GM12878 (cell line): ENCODE measurements at regions of chr19 and their contacts with region 1.

Region 1: GRCh38 chr19:7705387-7706187 is 3.7 kb upstream of the FCER2 start:
- DNase-seq: peak; percentile 91
- ATAC-seq: peak; percentile 66
- H3K4me3 ChIP-seq: peak overlapping the region; percentile 53; the same call in 1 of the 2 replicates
- H3K27ac ChIP-seq: peak overlapping the region; percentile 99
- H3K4me1 ChIP-seq: peaks cover 83% of the 10 kb centered on the region
- H3K27me3 ChIP-seq: no peaks in the 10 kb centered on the region
- CTCF ChIP-seq: no peak
- EP300 ChIP-seq: peak; percentile 88 to 92
- POLR2A ChIP-seq: peak; percentile 63; the same call in 1 of the 2 replicates
- RAD21 ChIP-seq: peak; percentile 52

Region 2: GRCh38 chr19:6521718-6522646 is 1183.6 kb before region 1 on chr19:
- CTCF ChIA-PET with region 1: no interaction called
- POLR2A ChIA-PET with region 1: no interaction called
- RAD21 ChIA-PET with region 1: no interaction called
- SMC1A ChIA-PET with region 1: no interaction called
- in situ Hi-C with region 1: loop called (anchors 10 kb)
- intact Hi-C with region 1: no loop called
- DNase-seq: peak; percentile 95
- ATAC-seq: peak; percentile 70
- H3K4me3 ChIP-seq: peak overlapping the region; percentile 60
- H3K27ac ChIP-seq: peak overlapping the region; percentile 99
- H3K4me1 ChIP-seq: peaks cover 52% of the 10 kb centered on the region
- H3K27me3 ChIP-seq: no peaks in the 10 kb centered on the region
- CTCF ChIP-seq: no peak
- EP300 ChIP-seq: peak; percentile 85 to 86; a peak in 2 of 4 replicates
- POLR2A ChIP-seq: peak; percentile 82
- RAD21 ChIP-seq: no peak

Region 3: DNA sequence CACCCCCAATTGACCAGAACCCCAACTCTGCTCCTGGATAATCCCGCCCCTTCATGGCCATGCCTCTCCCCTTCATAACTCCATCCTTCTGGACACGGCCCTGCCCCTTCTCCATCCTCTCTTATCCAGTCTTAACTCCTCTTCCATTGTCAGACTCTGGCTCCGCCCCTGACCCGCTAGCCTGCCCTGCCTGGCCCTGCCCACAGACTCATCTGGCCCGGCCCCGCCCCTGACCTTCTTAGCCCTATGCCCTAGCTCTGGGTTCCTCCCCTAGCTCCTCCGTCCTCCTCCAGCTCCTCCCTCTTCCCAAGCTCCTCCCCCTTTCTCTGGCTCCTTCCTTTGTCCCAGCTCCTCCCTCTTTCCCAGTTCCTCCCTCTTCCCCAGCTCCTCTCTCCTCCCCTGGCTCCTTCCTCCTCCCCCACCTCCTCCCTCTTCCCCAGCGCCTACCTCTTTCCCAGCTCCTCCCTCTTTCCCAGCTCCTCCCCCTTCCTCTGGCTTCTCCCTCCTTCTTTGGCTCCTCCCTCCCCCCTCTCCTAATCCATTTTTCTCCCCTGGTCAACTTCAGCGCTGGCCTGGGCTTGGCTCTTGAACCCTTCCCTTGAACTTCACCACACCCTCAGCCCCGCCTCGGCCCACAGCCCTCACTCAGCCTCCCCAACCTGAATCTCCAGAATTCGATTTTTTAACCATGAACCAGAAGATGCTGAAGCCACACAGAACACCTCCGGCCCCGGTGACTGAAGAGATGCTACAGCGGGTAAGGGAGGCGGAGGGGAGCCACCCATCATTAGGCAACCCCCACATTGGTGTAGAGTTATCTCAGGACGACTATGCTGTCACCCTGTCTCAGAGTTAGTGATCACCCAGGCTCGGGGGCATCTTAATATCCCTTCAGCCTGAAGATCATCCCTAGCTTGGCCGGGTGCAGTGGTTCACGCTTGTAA is 198.9 kb before region 1 on chr19:
- CTCF ChIA-PET with region 1: no interaction called
- POLR2A ChIA-PET with region 1: no interaction called
- RAD21 ChIA-PET with region 1: no interaction called
- SMC1A ChIA-PET with region 1: no interaction called
- in situ Hi-C with region 1: no loop called
- intact Hi-C with region 1: no loop called
- DNase-seq: no peak
- ATAC-seq: peak; percentile 86
- H3K4me3 ChIP-seq: no peak overlapping the region
- H3K27ac ChIP-seq: no peak overlapping the region
- H3K4me1 ChIP-seq: no peaks in the 10 kb centered on the region
- H3K27me3 ChIP-seq: no peaks in the 10 kb centered on the region
- CTCF ChIP-seq: no peak
- EP300 ChIP-seq: no peak
- POLR2A ChIP-seq: no peak
- RAD21 ChIP-seq: no peak

Region 4: DNA sequence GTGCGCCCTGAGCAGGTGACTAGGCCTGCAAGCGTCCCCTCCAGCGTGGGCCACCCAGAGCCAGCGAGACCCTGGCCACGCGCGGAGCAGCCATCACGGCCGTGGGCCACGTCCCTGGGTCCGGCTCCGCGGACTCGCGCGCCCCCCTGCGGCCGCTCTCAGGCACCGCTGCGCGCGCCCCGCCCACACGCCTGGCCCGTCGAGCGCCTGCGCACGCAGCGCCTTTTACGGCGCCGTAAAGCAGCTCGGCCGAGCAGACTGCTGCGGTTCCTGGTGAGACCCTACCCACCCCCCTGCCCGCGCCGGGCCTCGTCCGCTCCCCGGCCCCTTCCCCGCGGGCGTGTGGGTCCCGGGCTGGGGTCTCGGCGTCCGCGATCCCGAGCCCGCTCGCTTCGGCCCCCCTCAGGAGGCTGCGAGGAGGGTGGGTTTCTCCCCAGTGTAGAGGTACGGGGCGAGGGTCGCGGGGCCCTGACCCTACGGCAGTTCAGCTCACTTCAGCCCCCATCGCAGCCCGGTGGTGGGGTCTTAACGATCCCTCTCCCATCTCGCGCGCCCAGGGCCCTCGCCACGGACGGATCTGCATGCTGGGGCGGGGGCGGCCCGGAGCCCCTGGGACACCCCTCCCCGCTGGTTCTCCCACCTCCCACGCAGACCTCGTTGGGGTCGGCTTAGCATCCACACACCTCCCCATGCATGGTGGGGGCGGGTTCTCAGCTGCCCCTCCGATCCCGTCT is 24.8 kb before region 1 on chr19 and contains the start of gene TRAPPC5:
- CTCF ChIA-PET with region 1: interaction called, 15 read pairs
- POLR2A ChIA-PET with region 1: no interaction called
- RAD21 ChIA-PET with region 1: interaction called, 6 read pairs
- SMC1A ChIA-PET with region 1: interaction called, 26 read pairs
- in situ Hi-C with region 1: no loop called
- intact Hi-C with region 1: no loop called
- DNase-seq: no peak
- ATAC-seq: peak; percentile 79
- H3K4me3 ChIP-seq: peak within 1 kb of the TSS; percentile 85
- H3K27ac ChIP-seq: peak within 1 kb of the TSS; percentile 97
- H3K4me1 ChIP-seq: peaks cover 39% of the 10 kb centered on the region
- H3K27me3 ChIP-seq: no peaks in the 10 kb centered on the region
- CTCF ChIP-seq: peak; percentile 64 to 97 (median 94); a peak in 4 of 6 replicates
- EP300 ChIP-seq: no peak
- POLR2A ChIP-seq: 0 out of 2 replicates have a peak, but pooled peaks have one; percentile 65
- RAD21 ChIP-seq: peak; percentile 75
- polyA plus RNA-seq, gene TRAPPC5: 4.2 to 22.5 TPM

Region 5: DNA sequence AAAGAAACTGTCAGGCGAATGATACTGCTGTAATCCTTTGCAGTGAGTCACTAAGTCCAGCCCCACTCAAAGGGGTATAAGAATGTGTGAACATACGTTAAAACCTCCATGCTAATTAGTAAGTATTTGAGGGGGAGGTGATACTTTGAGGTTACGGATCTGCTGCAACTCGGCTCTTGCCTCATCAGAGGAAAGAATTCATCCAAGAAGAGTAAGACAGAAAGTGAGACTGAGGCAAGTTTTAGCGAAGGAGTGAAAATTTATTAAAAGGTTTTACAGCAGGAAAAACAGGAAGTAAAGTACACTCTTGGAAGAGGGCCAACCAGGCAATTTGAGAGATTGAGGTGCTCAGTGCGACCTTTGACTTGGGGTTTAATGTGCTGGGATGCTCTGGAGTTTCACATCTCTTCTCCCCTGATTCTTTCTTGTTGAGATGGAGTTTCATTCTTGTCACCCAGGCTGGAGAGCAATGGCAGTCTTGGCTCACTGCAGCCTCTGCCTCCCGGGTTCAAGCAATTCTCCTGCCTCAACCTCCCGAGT is 67.2 kb after region 1 on chr19:
- CTCF ChIA-PET with region 1: interaction called, 3 read pairs
- POLR2A ChIA-PET with region 1: interaction called, 5 read pairs
- RAD21 ChIA-PET with region 1: interaction called, 9 read pairs
- SMC1A ChIA-PET with region 1: no interaction called
- in situ Hi-C with region 1: no loop called
- intact Hi-C with region 1: loop called (anchors 1 kb)
- DNase-seq: peak; percentile 68
- ATAC-seq: peak; percentile 97
- H3K4me3 ChIP-seq: no peak overlapping the region
- H3K27ac ChIP-seq: no peak overlapping the region
- H3K4me1 ChIP-seq: peaks cover 17% of the 10 kb centered on the region
- H3K27me3 ChIP-seq: no peaks in the 10 kb centered on the region
- CTCF ChIP-seq: no peak
- EP300 ChIP-seq: peak; percentile 62 to 80; a peak in 3 of 4 replicates
- POLR2A ChIP-seq: no peak
- RAD21 ChIP-seq: no peak

Region 6: DNA sequence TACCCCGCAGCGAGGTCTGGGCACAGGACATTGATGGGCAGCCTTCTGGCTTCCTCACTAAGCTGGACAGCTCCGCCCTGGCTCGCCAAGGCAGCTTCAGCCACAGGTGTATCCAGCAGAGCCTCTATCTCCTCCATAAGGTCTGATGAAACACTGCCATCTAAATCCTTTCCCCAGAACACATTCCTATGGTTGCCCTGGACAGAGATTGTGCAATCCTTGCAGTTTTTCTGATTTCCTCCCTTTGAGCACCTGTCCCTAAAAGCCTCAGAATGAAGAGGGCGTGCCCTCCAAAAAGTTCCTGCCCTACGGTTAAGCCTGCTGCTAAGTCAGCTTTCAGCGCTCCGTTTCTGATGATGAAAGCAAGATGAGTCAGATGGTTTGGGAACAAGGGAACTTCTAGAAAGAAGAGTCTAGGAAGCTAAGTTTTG is 78.4 kb after region 1 on chr19:
- CTCF ChIA-PET with region 1: no interaction called
- POLR2A ChIA-PET with region 1: no interaction called
- RAD21 ChIA-PET with region 1: no interaction called
- SMC1A ChIA-PET with region 1: no interaction called
- in situ Hi-C with region 1: no loop called
- intact Hi-C with region 1: no loop called
- DNase-seq: no peak
- ATAC-seq: no peak
- H3K4me3 ChIP-seq: no peak overlapping the region
- H3K27ac ChIP-seq: no peak overlapping the region
- H3K4me1 ChIP-seq: no peaks in the 10 kb centered on the region; the same call in 1 of the 2 replicates
- H3K27me3 ChIP-seq: peaks cover 2 to 3% of the 10 kb centered on the region in 2 experiments; a peak in 3 of 4 replicates
- CTCF ChIP-seq: no peak
- EP300 ChIP-seq: no peak
- POLR2A ChIP-seq: no peak
- RAD21 ChIP-seq: no peak

Region 7: DNA sequence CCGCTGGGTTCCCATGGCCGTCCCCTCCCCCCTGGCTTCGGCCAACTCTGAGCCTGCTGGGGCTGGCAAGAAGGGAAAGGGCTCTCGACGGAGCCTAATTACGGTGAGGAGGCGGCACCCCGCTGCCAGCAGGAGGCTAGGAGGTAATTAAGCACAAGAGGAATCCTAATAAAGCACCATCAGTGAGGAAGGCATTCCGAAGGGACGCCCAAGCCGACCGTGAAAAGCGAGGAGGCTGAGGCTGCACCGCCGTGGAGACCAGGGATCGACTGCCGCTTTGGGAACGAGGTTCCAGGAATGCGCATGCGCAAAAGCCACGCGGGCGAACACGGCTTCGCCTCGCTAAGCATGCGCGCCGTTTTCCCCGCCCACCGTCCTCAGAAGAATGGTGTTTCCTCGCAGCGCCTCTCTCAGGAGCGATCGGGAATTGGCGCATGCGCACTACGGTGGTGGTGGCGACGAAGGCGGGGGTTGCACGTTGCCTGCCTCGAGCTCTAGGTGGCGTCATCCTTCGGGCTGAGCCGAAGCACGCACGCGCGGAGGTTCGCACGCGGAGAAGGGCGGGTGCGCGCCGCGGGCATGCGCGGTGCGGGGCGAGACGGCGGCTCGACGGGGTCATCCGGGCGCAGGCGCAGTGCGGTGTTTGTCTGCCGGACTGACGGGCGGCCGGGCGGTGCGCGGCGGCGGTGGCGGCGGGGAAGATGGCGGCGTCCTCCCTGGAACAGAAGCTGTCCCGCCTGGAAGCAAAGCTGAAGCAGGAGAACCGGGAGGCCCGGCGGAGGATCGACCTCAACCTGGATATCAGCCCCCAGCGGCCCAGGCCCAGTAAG is 197.9 kb after region 1 on chr19 and contains the start of gene MAP2K7:
- CTCF ChIA-PET with region 1: no interaction called
- POLR2A ChIA-PET with region 1: no interaction called
- RAD21 ChIA-PET with region 1: no interaction called
- SMC1A ChIA-PET with region 1: no interaction called
- in situ Hi-C with region 1: no loop called
- intact Hi-C with region 1: no loop called
- DNase-seq: peak; percentile 99
- ATAC-seq: peak; percentile 89
- H3K4me3 ChIP-seq: peak within 1 kb of the TSS; percentile 95
- H3K27ac ChIP-seq: peak within 1 kb of the TSS; percentile 81
- H3K4me1 ChIP-seq: peaks cover 14% of the 10 kb centered on the region
- H3K27me3 ChIP-seq: no peaks in the 10 kb centered on the region
- CTCF ChIP-seq: peak; percentile 65 to 99 (median 90); a peak in 5 of 6 replicates
- EP300 ChIP-seq: no peak; a peak in 1 of 4 replicates
- POLR2A ChIP-seq: peak; percentile 92
- RAD21 ChIP-seq: peak; percentile 36; the same call in 1 of the 2 replicates
- polyA plus RNA-seq, gene MAP2K7: 0.34 to 0.95 TPM

Region 8: GRCh38 chr19:8194528-8195267 is 489.1 kb after region 1 on chr19:
- CTCF ChIA-PET with region 1: no interaction called
- POLR2A ChIA-PET with region 1: no interaction called
- RAD21 ChIA-PET with region 1: no interaction called
- SMC1A ChIA-PET with region 1: no interaction called
- in situ Hi-C with region 1: no loop called
- intact Hi-C with region 1: loop called (anchors 10 kb)
- DNase-seq: no peak
- ATAC-seq: peak; percentile 57
- H3K4me3 ChIP-seq: peak overlapping the region; percentile 31; the same call in 1 of the 2 replicates
- H3K27ac ChIP-seq: peak overlapping the region; percentile 97
- H3K4me1 ChIP-seq: peaks cover 36% of the 10 kb centered on the region
- H3K27me3 ChIP-seq: no peaks in the 10 kb centered on the region
- CTCF ChIP-seq: no peak
- EP300 ChIP-seq: no peak
- POLR2A ChIP-seq: no peak
- RAD21 ChIP-seq: no peak